Right ventricle myocardium inferior (tissue), 1 donor: ENCODE measurements at regions of chr12 and their contacts with region 1.

Region 1: DNA sequence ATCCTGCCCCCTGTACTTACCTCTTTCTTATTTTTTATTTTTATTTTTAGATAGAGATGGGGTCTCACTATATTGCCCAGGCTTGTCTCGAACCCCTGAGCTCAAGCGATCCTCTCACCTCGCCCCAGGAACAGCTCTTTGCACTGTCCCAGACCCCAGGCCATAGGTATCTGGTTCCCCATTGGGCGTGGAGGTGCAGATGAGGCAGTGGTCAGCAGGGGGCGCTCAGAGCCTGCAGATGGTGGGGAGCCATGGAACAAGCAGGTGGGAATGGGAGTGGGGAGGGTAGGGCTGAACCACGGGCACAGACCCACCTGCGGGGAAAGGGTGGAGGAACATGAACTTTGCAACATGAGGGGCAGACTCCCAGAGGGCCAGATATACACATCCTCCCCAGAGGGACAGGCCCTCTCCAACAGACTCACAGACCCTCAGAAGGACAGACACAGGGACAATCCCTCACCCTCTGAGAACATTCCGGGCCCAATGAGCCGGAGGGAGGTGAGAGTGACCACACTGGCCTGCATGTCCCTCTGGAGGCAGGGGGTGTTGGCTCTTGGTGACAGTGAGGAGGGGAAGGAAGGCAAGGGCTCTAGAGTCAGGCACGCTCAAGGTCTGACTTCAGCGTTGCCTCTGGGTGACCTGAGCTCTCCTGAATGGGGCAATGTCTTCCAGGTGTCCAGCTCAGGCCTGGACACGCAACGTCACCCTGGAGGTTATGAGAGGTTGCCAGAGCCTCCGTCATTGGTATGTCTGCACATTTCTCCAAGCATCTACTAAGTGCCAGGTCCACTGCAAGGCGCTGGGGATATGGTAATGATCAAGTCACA is 34.9 kb downstream of the KRT80 start:
- DNase-seq: peak; percentile 82
- ATAC-seq: peak; percentile 62

Region 2: DNA sequence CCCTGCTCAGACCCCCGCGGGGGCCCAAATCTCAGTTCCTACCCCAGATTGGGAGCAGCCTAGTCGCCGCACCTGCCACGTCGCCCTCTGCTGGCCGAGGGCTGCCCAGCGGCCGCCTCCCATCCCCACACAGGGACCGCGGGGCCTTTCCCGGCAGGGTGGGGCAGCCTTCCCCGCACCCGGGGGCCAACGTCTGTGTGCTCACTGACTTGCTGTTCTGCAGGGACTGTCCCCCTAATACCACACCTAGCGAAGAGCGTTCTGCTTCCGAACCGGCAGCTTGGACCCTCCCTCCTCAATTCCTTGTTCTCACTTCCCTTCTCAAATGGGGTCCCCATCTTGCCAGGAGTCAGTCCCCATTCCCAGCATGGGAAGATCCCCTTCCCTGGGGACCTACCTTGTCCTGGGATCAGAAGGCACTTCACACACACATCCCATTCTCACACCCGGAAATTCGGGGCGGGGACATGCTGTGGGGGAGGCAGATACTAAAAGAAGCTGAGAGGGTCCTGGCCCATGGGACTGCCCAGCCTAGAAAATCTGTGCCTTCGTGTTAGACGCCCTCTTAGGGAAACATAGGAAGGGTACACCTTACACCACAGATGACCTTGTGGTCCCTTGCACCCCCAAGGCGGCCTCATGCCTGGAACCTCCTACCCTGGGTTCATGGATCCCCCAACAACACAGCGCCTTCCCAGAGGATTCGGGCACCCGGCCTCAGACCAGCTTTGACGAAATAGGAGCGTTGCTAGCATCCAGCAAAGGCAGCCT is 233.3 kb before region 1 on chr12:
- intact Hi-C with region 1: no loop called
- DNase-seq: peak; percentile 91
- ATAC-seq: peak; percentile 81

Region 3: DNA sequence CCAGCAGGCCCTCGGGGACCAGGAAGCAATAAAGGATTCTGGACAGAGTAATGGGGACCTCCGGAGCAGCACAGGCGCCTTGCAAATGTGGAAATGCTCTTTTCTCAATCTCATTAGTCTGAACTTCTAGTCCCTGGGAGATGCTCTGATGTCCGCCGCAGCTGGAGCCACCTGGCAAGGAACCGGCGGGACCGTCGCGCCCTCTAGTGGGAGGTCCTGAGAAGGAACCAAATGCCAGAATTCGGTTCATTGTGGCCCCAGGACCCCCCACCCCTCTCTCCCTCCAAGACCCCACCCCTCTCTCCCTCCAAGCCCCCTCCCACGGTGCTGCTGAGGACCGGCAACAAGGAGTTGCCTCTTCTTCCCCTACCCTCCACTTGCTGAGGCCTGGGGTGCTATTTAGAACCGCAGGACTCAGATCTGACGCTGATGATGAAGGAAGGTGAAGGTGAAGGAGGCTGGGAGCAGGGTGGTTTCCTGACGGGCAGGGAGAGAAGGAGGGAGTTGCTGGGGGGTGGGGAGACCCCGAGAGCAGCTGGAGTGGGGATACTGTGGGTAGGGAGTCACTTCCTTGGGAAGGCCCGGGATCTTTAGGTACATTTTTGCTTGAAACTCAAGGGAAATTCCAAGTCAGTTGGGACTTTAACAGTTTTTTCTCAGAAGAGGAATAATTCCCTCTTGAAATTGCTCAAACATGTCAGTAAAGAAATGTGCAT is 35.0 kb before region 1 on chr12:
- intact Hi-C with region 1: no loop called
- DNase-seq: peak; percentile 87
- ATAC-seq: peak; percentile 32

Region 4: DNA sequence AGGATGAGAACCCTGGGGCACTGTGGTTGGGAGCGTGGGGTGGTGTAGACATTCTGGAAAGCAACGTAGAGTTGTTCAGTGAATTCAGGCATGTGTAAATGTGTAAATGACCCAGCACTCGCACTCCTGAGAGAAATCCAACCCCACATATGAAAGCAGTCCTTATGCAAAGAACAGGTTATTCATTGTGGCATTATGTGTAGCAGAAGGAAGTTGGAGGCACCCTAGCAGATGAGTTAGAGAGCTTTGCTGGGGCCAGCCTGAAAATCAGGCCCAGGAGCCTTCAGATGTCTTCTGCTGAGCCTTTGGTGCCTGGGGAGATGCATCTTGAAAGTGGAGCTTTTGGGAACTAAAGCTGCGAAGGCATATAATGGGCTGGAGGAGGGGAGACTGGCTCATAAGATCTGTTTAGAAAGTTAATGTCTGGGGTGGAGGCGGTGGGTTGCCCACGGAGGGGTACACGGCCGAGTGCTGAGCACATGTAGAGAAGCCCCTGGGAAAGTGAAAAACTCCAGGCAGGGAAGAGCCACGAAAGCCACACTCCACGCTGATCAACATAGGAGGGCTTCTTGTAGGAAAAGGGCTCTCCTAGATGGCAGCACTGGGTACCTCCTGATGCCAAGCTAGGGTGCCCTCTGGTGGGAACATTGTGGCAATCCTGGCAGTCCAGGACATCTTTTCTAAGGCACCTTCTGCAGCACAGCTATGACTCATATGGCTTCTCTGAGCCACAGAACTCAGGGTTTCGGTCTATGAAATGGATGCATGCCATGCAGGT is 170.3 kb after region 1 on chr12:
- intact Hi-C with region 1: loop called (anchors 1 kb)
- DNase-seq: no peak
- ATAC-seq: peak; percentile 81

Region 5: GRCh38 chr12:52879394-52880351 is 722.7 kb after region 1 on chr12:
- intact Hi-C with region 1: loop called (anchors 2 kb)
- DNase-seq: peak; percentile 80
- ATAC-seq: peak; percentile 89